ENCODE measurements at regions of chr3 and their contacts with region 1.

Region 1: DNA sequence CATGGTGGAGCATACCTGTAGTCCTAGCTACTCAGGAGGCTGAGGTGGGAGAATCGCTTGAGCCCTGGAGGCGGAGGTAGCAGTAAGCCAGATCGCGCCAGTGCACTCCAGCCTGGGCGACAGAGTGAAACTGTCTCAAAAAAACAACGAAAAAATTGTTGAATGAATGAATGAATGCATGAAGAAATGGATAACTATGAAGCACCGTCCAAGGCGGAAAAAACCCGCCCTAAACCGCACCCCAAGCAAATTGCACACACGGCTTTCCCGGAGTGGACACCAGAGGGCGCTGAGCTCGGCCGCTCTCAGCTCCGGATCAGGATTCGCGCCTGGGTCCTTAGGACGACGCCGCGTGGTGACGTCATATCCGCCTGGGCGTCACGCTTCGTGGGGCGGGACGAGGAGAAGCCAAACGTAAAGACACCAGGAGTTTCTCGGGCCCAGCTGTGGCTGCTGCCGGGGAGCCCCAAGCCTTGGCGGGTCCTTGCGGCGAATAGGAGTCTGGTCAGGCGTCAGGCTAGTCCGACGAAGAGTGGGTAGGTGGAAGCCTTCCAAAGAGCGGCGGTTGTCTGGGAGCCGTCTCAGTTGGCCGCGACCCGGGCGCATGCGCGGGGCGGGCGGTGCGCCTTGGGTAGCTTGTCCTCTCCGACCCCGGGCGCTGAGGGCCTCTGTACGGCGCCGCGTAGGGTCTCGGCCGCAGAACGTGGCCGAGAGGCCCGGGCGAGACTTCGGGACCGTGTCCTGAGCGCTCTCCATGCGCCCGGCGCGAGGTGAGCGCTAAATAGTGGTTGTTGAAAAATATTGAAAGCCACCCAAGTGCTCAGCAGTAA is at the starts of genes HTD2 and RPP14:
- DNase-seq: peak; percentile 100
- H3K4me3 Mint-ChIP-seq: peak within 1 kb of the TSS; percentile 98
- H3K27ac Mint-ChIP-seq: peak within 1 kb of the TSS; percentile 99
- H3K4me1 Mint-ChIP-seq: peaks cover 22% of the 10 kb centered on the region
- H3K27me3 Mint-ChIP-seq: peaks cover 10% of the 10 kb centered on the region
- total RNA-seq, gene HTD2: 9.7 and 11.5 TPM in 2 replicates
- total RNA-seq, gene RPP14: 22.7 and 25.2 TPM in 2 replicates

Region 2: DNA sequence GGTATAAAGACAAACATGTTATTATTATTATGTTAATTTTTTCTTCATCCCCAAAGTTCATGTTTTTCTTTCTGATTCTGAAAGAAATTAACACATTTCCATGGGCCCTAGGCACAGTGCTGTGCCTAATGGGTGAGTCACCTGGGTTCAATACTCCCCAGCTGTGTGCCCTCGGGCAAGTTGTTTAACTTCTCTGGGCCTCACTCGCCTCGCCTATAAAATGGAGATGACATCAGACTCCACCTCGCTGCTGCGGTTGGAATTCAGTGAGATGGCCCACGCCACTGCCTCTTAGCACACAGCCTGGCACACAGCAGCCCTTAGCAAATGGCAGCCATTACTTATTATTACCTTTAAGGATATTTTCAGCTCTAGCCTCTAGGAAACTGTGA is 117.9 kb before region 1 on chr3:
- intact Hi-C with region 1: loop called (anchors 2 kb)
- DNase-seq: no peak
- H3K4me3 Mint-ChIP-seq: no peak overlapping the region
- H3K27ac Mint-ChIP-seq: no peak overlapping the region
- H3K4me1 Mint-ChIP-seq: no peaks in the 10 kb centered on the region
- H3K27me3 Mint-ChIP-seq: peaks cover 2% of the 10 kb centered on the region

Region 3: DNA sequence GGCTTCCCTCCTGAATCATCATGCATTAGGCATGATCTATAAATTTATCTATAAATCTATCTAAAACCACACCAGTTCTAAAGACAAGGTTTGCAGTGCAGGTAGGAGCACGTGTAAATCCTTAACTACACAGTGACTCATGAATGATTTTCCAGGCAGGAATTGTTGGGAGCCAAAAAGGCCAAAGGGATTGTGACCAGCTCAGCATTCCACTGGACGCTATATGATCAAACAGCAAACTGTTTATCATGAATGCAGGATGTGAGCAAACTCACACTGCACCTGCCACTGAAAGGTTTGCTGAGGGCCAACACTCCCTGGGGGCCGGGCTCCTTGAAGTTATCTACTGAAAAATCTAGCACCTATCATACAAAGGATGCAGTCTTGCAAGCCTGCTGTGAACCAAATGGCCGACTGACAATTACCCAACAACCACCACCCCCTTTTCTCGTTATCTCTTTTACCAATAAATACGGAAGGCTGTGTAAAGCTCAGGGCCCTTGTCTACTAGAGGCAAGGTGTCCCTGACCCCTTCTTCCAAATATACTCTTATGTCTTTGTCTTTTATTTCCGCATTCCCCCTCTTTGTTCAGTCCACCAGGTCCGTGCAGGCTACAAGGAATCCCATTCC is 83.9 kb before region 1 on chr3:
- intact Hi-C with region 1: no loop called
- DNase-seq: no peak
- H3K4me3 Mint-ChIP-seq: no peak overlapping the region
- H3K27ac Mint-ChIP-seq: no peak overlapping the region
- H3K4me1 Mint-ChIP-seq: no peaks in the 10 kb centered on the region
- H3K27me3 Mint-ChIP-seq: peaks cover 14% of the 10 kb centered on the region

Region 4: GRCh38 chr3:58332575-58333188 is 26.6 kb after region 1 on chr3 and contains the start of gene PXK:
- intact Hi-C with region 1: loop called (anchors 1 kb)
- DNase-seq: peak; percentile 96
- H3K4me3 Mint-ChIP-seq: peak within 1 kb of the TSS; percentile 99
- H3K27ac Mint-ChIP-seq: peak within 1 kb of the TSS; percentile 99
- H3K4me1 Mint-ChIP-seq: peaks cover 39% of the 10 kb centered on the region
- H3K27me3 Mint-ChIP-seq: no peaks in the 10 kb centered on the region
- total RNA-seq, gene PXK: 41.1 and 45.7 TPM in 2 replicates

Region 5: DNA sequence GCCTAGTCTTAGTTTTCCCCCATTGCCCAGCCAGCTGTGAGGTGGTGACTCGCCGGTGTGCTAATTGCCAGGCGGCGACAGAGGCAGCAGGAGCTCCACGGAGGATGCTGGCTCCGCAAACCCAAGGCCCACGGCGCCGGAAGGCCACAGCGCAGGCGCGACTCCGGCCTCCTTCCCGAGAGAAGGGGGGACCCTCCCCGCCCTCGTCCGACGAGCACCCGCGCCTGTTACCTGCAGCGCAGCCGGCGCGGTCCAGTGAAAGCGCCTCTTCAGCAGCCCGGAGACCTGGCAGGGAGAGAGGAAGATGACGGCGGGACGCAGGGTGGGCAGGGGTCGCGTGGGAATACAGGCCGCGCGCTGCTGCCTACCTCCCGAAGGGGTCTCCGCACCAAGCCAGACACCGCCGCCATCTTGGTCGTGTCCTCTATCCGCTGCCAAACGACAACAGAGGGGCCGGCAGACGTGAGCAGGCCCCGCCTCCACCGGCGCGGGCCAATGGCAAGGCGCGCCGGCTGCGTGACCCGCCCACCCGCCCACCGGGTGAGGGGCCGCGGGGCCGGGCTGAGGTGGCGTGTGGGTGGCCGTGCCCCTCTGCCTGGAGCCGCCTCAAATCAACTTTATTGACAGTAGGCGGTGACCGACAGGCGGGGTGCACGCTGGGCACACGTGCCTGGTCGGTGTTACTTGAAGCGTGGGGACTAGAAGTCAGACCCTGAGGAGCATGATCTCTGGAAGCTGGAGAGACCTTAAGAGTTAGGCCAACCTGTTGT is 127.5 kb after region 1 on chr3 and contains the start of gene PDHB:
- intact Hi-C with region 1: loop called (anchors 1 kb)
- DNase-seq: peak; percentile 97
- H3K4me3 Mint-ChIP-seq: peak within 1 kb of the TSS; percentile 92
- H3K27ac Mint-ChIP-seq: peak within 1 kb of the TSS; percentile 93
- H3K4me1 Mint-ChIP-seq: peaks cover 18% of the 10 kb centered on the region
- H3K27me3 Mint-ChIP-seq: peaks cover 11% of the 10 kb centered on the region
- total RNA-seq, gene PDHB: 68.0 and 69.3 TPM in 2 replicates

Region 6: DNA sequence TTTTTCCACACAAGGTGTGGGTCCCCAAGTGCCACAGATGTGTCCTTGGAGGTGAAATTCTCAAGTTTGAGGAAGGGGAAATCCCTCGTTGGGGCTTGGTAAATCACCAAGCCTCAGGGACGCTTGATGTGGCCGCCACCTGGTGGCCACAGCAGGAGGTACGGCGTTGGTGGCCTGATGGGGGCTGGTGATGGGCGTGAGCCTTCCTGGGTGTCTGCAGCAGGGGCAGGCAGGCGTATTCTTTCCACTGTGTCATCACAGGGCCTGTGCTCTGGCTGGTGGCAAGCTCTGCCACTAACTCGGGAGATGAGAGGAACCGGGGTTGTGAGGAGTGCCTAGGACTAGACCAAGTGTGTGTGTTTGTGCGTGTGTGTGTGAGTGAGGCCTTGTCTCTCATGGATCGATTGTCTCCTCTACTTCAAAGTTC is 226.7 kb after region 1 on chr3:
- intact Hi-C with region 1: loop called (anchors 1 kb)
- DNase-seq: peak; percentile 94
- H3K4me3 Mint-ChIP-seq: no peak overlapping the region
- H3K27ac Mint-ChIP-seq: peak overlapping the region; percentile 54
- H3K4me1 Mint-ChIP-seq: peaks cover 16% of the 10 kb centered on the region
- H3K27me3 Mint-ChIP-seq: peaks cover 7% of the 10 kb centered on the region

Region 7: GRCh38 chr3:58857402-58857801 is 551.3 kb after region 1 on chr3:
- intact Hi-C with region 1: no loop called
- DNase-seq: no peak
- H3K4me3 Mint-ChIP-seq: no peak overlapping the region
- H3K27ac Mint-ChIP-seq: no peak overlapping the region
- H3K4me1 Mint-ChIP-seq: no peaks in the 10 kb centered on the region
- H3K27me3 Mint-ChIP-seq: no peaks in the 10 kb centered on the region

Measured in activated CD4-positive, alpha-beta T cell treated with anti-CD3 and anti-CD28 coated beads, Interleukin-2, amount 10 ng/mL, durations not matched to agents 24 days and 14 days (primary cell).